Transverse colon (tissue), 4 donors: ENCODE measurements at regions of chr1 and their contacts with region 1.

Region 1: GRCh38 chr1:146019231-146020057 is 2.1 kb downstream of the HJV start:
- DNase-seq: no peak
- H3K4me3 ChIP-seq: peak overlapping the region in 1 of 4 donors; percentile 31
- H3K27ac ChIP-seq: no peak overlapping the region
- H3K4me1 ChIP-seq: peaks cover 0 to 10% (median 7%) of the 10 kb centered on the region in 4 donors
- H3K27me3 ChIP-seq: peaks cover 54% of the 10 kb centered on the region
- CTCF ChIP-seq: no peak
- EP300 ChIP-seq: no peak
- POLR2A ChIP-seq: no peak

Region 2: GRCh38 chr1:144101397-144102045 is 1917.9 kb before region 1 on chr1:
- in situ Hi-C with region 1: no loop called
- intact Hi-C with region 1: no loop called
- DNase-seq: peak; percentile 11
- H3K4me3 ChIP-seq: no peak overlapping the region
- H3K27ac ChIP-seq: no peak overlapping the region
- H3K4me1 ChIP-seq: no peaks in the 10 kb centered on the region
- H3K27me3 ChIP-seq: no peaks in the 10 kb centered on the region
- CTCF ChIP-seq: no peak
- EP300 ChIP-seq: no peak
- POLR2A ChIP-seq: no peak

Region 3: GRCh38 chr1:145845514-145846161 is 173.8 kb before region 1 on chr1 and contains the start of gene NUDT17:
- in situ Hi-C with region 1: loop called in 1 of 4 experiments (anchors 5 kb)
- intact Hi-C with region 1: loop called (anchors 10 kb)
- DNase-seq: peak; percentile 80
- H3K4me3 ChIP-seq: peak within 1 kb of the TSS; percentile 4 to 56 (median 46)
- H3K27ac ChIP-seq: peak within 1 kb of the TSS; percentile 73 to 76 (median 73)
- H3K4me1 ChIP-seq: peaks cover 0 to 17% (median 11%) of the 10 kb centered on the region in 4 donors
- H3K27me3 ChIP-seq: no peaks in the 10 kb centered on the region
- CTCF ChIP-seq: peak; percentile 89 to 97 (median 91)
- EP300 ChIP-seq: no peak
- POLR2A ChIP-seq: no peak
- total RNA-seq, gene NUDT17: 0.95 to 2.2 (median 1.1) TPM in 3 of 4 donors, not detected in the other

Region 4: DNA sequence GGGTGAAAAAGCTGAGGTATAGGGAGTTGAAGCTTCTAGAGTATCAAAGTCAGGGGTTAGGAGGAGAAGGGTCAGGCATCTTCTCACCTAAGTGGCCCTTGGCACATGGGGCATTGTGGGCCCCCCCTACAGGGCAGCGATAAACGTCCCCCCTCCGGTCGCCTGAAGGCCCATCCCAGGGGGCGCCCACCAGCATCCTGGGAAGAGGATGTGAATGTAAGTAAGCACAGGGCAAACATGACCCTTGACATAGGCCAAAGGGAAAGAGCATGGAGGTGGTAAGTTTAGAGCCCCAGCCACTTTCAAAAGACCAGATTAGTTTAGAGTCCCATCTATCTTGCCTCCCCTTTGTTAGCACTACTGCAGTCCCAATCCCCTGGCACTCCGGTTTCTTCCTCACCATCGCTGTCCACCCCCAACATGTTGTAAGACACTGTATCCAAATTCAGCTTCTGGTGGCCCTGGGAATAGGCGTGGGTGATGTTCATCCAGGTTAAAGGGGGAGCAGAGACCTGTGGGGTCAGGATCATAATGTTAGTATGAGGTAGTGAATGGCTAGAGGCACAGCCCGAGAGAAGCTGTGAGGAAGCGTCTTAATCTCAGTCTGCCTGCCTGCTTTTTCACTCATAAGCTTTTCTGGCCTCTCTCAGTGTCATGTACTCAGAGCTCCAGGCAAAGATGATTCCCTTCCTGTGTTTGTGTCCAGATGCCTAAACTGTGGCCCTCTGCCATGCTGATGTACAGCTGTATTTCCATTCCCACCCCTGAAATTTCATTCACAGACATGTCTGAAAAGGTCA is 112.3 kb before region 1 on chr1:
- in situ Hi-C with region 1: no loop called
- intact Hi-C with region 1: loop called (anchors 2 kb)
- DNase-seq: no peak
- H3K4me3 ChIP-seq: no peak overlapping the region
- H3K27ac ChIP-seq: no peak overlapping the region
- H3K4me1 ChIP-seq: peaks cover 0 to 5% (median 0%) of the 10 kb centered on the region in 4 donors
- H3K27me3 ChIP-seq: no peaks in the 10 kb centered on the region
- CTCF ChIP-seq: no peak
- EP300 ChIP-seq: no peak
- POLR2A ChIP-seq: no peak